ENCODE measurements at regions of chr7 and their contacts with region 1.

Region 1: DNA sequence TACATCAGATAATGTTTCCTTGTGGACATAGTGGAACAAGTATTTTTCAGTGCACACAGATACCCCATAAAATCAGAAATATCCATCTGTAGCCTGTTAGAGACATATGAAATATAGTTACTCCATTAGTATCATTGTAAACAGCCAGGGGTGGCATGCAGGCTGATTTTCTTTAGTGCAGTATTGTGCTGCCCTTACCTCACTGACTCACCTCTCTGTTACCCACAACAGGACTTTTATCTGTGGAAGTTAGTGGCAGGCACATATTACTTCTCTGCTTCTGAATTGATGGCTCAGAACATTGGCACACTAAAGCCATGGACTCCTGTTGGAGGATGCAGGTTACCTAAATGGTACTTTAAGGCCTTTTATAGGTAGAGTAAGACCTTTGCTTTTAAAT is 70.0 kb downstream of the SLC25A40 start:
- DNase-seq: no peak
- H3K4me3 ChIP-seq: no peak overlapping the region
- H3K27ac ChIP-seq: no peak overlapping the region
- H3K4me1 ChIP-seq: no peaks in the 10 kb centered on the region
- H3K27me3 ChIP-seq: no peaks in the 10 kb centered on the region
- CTCF ChIP-seq: no peak

Region 2: DNA sequence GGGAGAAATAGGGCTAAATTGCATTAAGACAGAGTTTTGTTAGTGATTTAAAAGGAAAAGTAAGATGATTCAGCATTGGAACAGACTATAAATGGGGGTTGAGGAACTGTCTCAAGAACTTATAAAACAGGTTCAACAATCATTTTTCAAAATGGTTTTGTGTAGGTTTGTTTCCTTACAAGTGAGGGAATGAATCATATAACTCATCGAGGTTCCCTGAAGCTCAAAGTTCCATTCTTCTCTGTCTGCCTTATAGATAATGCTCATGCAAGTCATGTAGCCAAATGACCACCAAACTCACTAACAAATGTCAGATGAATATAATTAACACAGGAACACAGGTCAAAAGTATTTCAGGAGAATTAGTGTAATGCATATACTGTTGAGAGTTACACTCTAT is 155.6 kb after region 1 on chr7:
- intact Hi-C with region 1: no loop called
- DNase-seq: no peak
- H3K4me3 ChIP-seq: no peak overlapping the region
- H3K27ac ChIP-seq: no peak overlapping the region
- H3K4me1 ChIP-seq: no peaks in the 10 kb centered on the region
- H3K27me3 ChIP-seq: no peaks in the 10 kb centered on the region
- CTCF ChIP-seq: no peak

Region 3: DNA sequence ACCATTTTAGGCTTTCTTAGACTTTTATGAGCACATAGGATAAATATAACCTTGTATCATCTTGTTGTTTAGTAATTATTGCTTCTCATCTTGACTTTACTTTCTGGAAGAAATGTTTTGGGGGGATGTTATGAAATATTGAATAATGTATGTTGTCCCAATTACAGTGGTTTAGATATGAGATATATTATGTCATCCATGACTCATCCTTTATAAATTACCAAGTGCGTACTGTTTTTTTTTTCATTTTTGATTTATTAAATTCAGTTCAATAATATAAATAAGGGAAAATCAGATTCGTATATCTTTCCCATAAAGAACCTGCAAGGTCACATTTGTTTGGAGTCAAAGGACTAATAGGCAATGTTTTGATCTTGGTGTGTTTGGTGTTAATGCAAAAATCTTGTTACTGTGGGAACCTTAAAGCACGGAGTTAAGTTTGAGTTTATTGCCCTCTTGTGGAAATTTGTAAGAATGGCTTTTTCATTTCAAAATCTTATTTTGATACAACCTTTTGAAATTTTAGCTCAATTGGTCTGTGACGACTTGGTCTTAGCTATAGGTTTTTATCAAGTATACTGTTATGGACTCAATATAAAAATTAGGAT is 305.1 kb after region 1 on chr7:
- intact Hi-C with region 1: loop called (anchors 10 kb)
- DNase-seq: no peak
- H3K4me3 ChIP-seq: no peak overlapping the region
- H3K27ac ChIP-seq: no peak overlapping the region
- H3K4me1 ChIP-seq: peaks cover 23% of the 10 kb centered on the region
- H3K27me3 ChIP-seq: no peaks in the 10 kb centered on the region
- CTCF ChIP-seq: peak; percentile 73

Region 4: GRCh38 chr7:88140947-88141346 is 334.8 kb after region 1 on chr7:
- intact Hi-C with region 1: no loop called
- DNase-seq: no peak
- H3K4me3 ChIP-seq: no peak overlapping the region
- H3K27ac ChIP-seq: no peak overlapping the region
- H3K4me1 ChIP-seq: no peaks in the 10 kb centered on the region
- H3K27me3 ChIP-seq: no peaks in the 10 kb centered on the region
- CTCF ChIP-seq: no peak